MCF 10A (cell line): ENCODE measurements at regions of chr12 and their contacts with region 1.

Region 1: GRCh38 chr12:39103552-39104165 is 198.3 kb upstream of the CPNE8 start:
- DNase-seq: peak; percentile 87
- H3K4me3 Mint-ChIP-seq: no peak overlapping the region
- H3K27ac Mint-ChIP-seq: no peak overlapping the region
- H3K4me1 Mint-ChIP-seq: peaks cover 26% of the 10 kb centered on the region
- H3K27me3 Mint-ChIP-seq: no peaks in the 10 kb centered on the region
- CTCF ChIP-seq: peak; percentile 75

Region 2: GRCh38 chr12:38332814-38333213 is 770.8 kb before region 1 on chr12:
- CTCF ChIA-PET with region 1: interaction called, 17 read pairs
- POLR2A ChIA-PET with region 1: no interaction called
- intact Hi-C with region 1: loop called (anchors 1 kb)
- DNase-seq: no peak
- H3K4me3 Mint-ChIP-seq: no peak overlapping the region
- H3K27ac Mint-ChIP-seq: no peak overlapping the region
- H3K4me1 Mint-ChIP-seq: no peaks in the 10 kb centered on the region
- H3K27me3 Mint-ChIP-seq: no peaks in the 10 kb centered on the region
- CTCF ChIP-seq: no peak

Region 3: DNA sequence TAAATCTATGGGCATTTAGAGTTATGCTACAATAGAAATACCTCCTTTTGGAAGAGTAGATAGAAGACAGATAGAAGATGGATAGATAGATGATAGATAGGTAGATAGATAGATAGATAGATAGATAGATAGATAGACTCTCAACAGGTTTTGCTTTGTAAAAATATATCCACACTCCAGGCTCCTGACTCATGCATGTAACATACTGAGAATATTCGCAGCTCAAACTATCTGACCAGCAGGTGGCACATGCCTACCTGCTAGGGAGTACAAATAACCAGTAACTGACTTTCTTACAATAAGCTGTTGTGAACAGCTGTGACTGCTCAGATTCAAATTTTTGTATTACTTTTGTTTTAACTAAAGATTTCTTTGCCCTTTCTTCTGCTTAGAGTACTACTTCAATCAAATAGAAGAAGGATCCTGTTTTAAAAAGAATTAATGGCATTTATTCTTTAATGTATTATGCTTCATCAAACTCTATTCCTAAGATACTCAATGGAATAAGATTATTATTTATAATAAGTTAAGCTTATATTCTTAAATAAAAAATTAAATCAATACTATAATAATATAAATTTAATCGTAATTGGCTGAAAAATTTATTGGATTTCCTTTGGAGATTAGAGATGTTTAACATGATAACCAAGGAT is 182.5 kb before region 1 on chr12:
- CTCF ChIA-PET with region 1: interaction called, 151 read pairs
- POLR2A ChIA-PET with region 1: interaction called, 19 read pairs
- intact Hi-C with region 1: loop called (anchors 1 kb)
- DNase-seq: peak; percentile 84
- H3K4me3 Mint-ChIP-seq: no peak overlapping the region
- H3K27ac Mint-ChIP-seq: no peak overlapping the region
- H3K4me1 Mint-ChIP-seq: peaks cover 7% of the 10 kb centered on the region
- H3K27me3 Mint-ChIP-seq: no peaks in the 10 kb centered on the region
- CTCF ChIP-seq: peak; percentile 71

Region 4: GRCh38 chr12:38934686-38935085 is 169.0 kb before region 1 on chr12:
- CTCF ChIA-PET with region 1: interaction called, 13 read pairs
- POLR2A ChIA-PET with region 1: no interaction called
- intact Hi-C with region 1: no loop called
- DNase-seq: no peak
- H3K4me3 Mint-ChIP-seq: no peak overlapping the region
- H3K27ac Mint-ChIP-seq: no peak overlapping the region
- H3K4me1 Mint-ChIP-seq: peaks cover 5% of the 10 kb centered on the region
- H3K27me3 Mint-ChIP-seq: no peaks in the 10 kb centered on the region
- CTCF ChIP-seq: no peak

Region 5: GRCh38 chr12:39074063-39074462 is 29.6 kb before region 1 on chr12:
- CTCF ChIA-PET with region 1: interaction called, 23 read pairs
- POLR2A ChIA-PET with region 1: interaction called, 11 read pairs
- intact Hi-C with region 1: loop called (anchors 5 kb)
- DNase-seq: no peak
- H3K4me3 Mint-ChIP-seq: no peak overlapping the region
- H3K27ac Mint-ChIP-seq: no peak overlapping the region
- H3K4me1 Mint-ChIP-seq: peaks cover 12% of the 10 kb centered on the region
- H3K27me3 Mint-ChIP-seq: no peaks in the 10 kb centered on the region
- CTCF ChIP-seq: no peak

Region 6: GRCh38 chr12:39145175-39145999 is 41.7 kb after region 1 on chr12:
- CTCF ChIA-PET with region 1: no interaction called
- POLR2A ChIA-PET with region 1: no interaction called
- intact Hi-C with region 1: no loop called
- DNase-seq: peak; percentile 52
- H3K4me3 Mint-ChIP-seq: peak overlapping the region; percentile 61
- H3K27ac Mint-ChIP-seq: no peak overlapping the region
- H3K4me1 Mint-ChIP-seq: no peaks in the 10 kb centered on the region
- H3K27me3 Mint-ChIP-seq: no peaks in the 10 kb centered on the region
- CTCF ChIP-seq: peak; percentile 57